ENCODE measurements at regions of chrX and their contacts with region 1.

Region 1: GRCh38 chrX:68462653-68463052 is 29.4 kb upstream of the OPHN1 start:
- DNase-seq: no peak
- H3K4me3 ChIP-seq: no peak overlapping the region
- H3K27ac ChIP-seq: no peak overlapping the region
- H3K4me1 ChIP-seq: no peaks in the 10 kb centered on the region
- H3K27me3 ChIP-seq: no peaks in the 10 kb centered on the region
- CTCF ChIP-seq: peak; percentile 44 to 61 (median 49)
- EP300 ChIP-seq: no peak
- POLR2A ChIP-seq: no peak

Region 2: DNA sequence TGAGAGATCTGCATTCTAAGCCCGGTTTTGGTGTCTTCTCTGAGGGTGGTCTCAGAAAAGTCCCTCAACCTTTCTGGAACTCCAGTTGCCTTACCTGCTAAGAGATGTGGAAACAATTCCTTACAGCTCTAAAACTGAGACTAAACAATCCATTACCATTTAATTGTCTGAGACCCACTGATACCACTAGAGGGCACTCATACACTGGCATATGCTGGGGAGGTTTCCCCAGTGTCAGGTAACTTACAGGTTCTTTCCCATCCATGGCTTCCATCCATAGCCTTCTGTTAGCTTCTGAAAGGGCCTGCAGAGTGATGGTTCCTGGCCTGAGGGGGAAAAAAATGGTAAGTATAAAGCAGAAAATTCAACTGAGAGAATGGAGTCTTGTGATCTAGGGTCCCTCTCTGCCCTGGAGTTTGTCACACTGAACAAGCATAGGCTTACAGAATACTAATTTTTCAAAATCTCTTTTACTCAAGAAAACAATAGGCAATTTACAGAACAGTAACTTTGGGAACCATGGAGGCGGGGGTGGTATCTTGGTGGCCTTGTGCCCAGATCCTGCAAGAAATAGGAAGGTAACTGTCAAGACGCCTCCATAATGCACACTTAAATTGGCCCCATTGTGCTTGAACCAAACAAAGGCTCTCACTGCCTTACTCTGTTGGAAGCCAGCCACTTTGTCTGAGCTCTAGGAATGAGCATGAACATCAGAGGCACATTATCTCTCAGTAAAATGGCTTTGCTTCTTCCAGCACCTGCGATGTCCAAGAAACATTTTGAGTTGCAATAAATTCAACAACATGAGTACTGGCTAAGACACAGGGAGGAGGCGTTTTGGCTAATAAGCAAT is 265.5 kb before region 1 on chrX:
- intact Hi-C with region 1: loop called (anchors 2 kb)
- DNase-seq: no peak
- H3K4me3 ChIP-seq: no peak overlapping the region
- H3K27ac ChIP-seq: no peak overlapping the region
- H3K4me1 ChIP-seq: no peaks in the 10 kb centered on the region
- H3K27me3 ChIP-seq: no peaks in the 10 kb centered on the region
- CTCF ChIP-seq: peak; percentile 54 to 64 (median 60)
- EP300 ChIP-seq: no peak
- POLR2A ChIP-seq: no peak

Measured in esophagus muscularis mucosa (tissue), 4 donors.